Mammary epithelial cell (primary cell): ENCODE measurements at regions of chr21 and their contacts with region 1.

Region 1: DNA sequence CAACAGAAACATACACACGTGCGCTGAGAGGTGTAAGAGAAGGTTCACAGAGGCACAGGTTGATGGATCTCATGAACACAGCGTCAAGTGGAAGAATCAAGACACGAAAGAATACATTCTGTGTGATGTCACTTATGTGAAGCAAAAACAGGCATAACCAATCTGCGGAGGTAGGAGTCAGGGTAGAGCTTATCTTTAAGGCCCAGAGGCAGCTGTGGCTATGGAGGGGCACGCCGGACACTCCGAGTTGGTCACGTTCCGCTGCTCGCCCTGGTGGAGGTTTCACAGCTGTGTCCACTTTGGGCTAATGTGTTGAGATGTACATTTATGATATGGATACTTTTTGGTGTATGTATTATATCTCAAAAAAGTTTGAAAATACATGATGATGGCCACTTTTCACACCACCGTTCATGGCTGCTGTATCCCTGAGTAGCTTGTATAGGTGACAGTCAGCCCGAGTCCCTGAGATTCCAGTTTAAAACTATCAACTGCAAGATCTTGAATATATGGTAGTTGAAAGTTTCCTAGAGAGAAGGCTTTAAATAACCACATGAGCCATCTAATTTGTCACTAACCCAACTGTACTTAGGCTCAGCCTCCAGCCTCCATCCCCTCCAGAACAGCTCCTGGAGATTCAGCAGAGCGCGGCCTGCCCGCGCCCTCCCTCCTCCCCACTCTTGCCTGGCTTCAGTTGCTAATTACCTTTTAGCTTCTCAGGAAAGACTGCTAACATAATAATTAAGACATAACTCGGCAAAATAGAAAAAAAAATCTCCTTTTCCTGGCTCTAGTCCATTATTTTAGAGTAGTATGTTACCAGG is 6.7 kb upstream of the ADARB1 start:
- DNase-seq: no peak
- H3K4me3 ChIP-seq: no peak overlapping the region
- H3K27ac ChIP-seq: no peak overlapping the region
- H3K4me1 ChIP-seq: peaks cover 6% of the 10 kb centered on the region
- H3K27me3 ChIP-seq: no peaks in the 10 kb centered on the region
- CTCF ChIP-seq: no peak

Region 2: GRCh38 chr21:45042647-45043161 is 25.0 kb before region 1 on chr21:
- CTCF ChIA-PET with region 1: no interaction called
- dilution Hi-C with region 1: no loop called
- in situ Hi-C with region 1: no loop called
- intact Hi-C with region 1: loop called (anchors 2 kb)
- DNase-seq: no peak
- H3K4me3 ChIP-seq: no peak overlapping the region
- H3K27ac ChIP-seq: no peak overlapping the region
- H3K4me1 ChIP-seq: peaks cover 6% of the 10 kb centered on the region
- H3K27me3 ChIP-seq: no peaks in the 10 kb centered on the region
- CTCF ChIP-seq: no peak

Region 3: DNA sequence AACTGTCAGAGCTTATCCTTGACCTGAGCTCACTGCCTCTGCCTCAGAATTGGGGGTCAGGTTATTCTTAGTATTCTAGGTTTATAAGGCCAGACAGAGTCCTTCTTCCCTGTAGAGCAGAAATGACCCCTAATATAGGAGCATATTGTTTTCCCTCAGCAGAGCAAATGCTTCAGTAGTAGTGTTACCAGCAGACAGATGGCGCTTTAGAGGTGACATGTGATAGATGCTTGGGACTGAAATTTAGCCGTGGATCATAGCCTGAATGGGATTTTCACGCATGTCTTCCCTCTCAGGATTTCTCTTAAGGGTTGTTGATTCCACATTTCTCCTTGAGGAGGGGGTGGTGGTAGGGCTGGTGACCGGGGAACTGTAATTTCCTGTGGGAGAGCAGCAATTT is 31.2 kb after region 1 on chr21:
- CTCF ChIA-PET with region 1: no interaction called
- dilution Hi-C with region 1: no loop called
- in situ Hi-C with region 1: no loop called
- intact Hi-C with region 1: no loop called
- DNase-seq: no peak
- H3K4me3 ChIP-seq: no peak overlapping the region
- H3K27ac ChIP-seq: no peak overlapping the region
- H3K4me1 ChIP-seq: peaks cover 28% of the 10 kb centered on the region
- H3K27me3 ChIP-seq: no peaks in the 10 kb centered on the region
- CTCF ChIP-seq: peak; percentile 22 to 43